A549 (cell line): ENCODE measurements at regions of chr9 and their contacts with region 1.

Region 1: GRCh38 chr9:34403554-34404380 is 27.1 kb upstream of the MYORG start:
- DNase-seq: peak; percentile 66 to 73
- ATAC-seq: peak; percentile 72 to 87; a peak in 5 of 6 replicates
- H3K4me3 ChIP-seq: no peak overlapping the region
- H3K27ac ChIP-seq: no peak overlapping the region
- H3K4me1 ChIP-seq: 0 out of 3 replicates have a peak, but pooled peaks cover 3% of the 10 kb centered on the region
- CTCF ChIP-seq: peak; percentile 96
- EP300 ChIP-seq: no peak
- POLR2A ChIP-seq: no peak
- RAD21 ChIP-seq: peak; percentile 76 to 87

Region 2: DNA sequence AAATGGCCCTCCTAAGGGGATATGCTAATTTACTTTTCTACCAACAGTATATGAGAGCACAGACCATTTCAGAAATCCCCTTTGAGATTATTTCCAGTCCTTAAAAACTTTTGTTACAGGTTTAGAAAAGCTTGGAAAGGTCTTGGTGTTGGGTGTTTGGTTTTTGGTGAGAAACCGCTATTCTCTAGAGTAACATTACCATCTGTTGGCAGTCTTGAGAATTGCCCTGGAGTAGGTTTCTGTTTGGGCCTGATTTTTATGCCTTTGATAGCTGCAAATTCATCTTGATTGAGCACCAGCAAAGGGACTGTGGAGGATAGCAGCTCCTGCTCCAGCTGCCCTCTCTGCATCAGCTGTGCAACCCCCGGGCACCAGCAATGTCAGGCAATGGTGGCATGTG is 66.4 kb before region 1 on chr9:
- CTCF ChIA-PET with region 1: interaction called, 13 read pairs
- POLR2A ChIA-PET with region 1: no interaction called
- DNase-seq: peak in 1 of 2 experiments; percentile 16
- ATAC-seq: no peak
- H3K4me3 ChIP-seq: no peak overlapping the region
- H3K27ac ChIP-seq: no peak overlapping the region
- H3K4me1 ChIP-seq: peaks cover 4% of the 10 kb centered on the region; the same call in 2 of the 3 replicates
- CTCF ChIP-seq: no peak
- EP300 ChIP-seq: no peak
- POLR2A ChIP-seq: no peak
- RAD21 ChIP-seq: peak; percentile 11 to 39; a peak in 2 of 5 replicates

Region 3: GRCh38 chr9:34419716-34420504 is 16.1 kb after region 1 on chr9:
- CTCF ChIA-PET with region 1: interaction called, 63 read pairs
- POLR2A ChIA-PET with region 1: no interaction called
- DNase-seq: no peak
- ATAC-seq: no peak
- H3K4me3 ChIP-seq: no peak overlapping the region
- H3K27ac ChIP-seq: no peak overlapping the region
- H3K4me1 ChIP-seq: no peaks in the 10 kb centered on the region
- CTCF ChIP-seq: no peak
- EP300 ChIP-seq: no peak
- POLR2A ChIP-seq: no peak
- RAD21 ChIP-seq: no peak

Region 4: DNA sequence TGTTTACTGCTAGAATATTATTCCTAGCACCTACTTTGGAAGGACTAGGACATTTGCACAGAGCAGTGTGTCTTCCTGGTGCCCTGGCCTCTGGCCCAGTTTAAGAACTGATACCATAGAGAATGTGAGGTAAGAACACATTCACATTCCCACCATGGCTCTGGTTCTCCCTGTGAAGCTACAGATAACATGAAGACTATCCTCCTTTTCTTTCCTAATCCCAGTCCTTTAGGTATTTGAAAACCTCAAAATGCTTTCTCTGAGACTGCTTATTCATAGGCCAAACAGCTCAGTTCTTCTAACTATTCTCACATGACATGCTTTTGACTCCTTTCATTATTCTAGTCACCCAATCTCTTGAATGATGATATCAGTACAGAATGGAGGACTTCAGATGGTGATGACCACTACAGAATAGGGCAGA is 42.7 kb after region 1 on chr9:
- CTCF ChIA-PET with region 1: interaction called, 18 read pairs
- POLR2A ChIA-PET with region 1: no interaction called
- DNase-seq: no peak
- ATAC-seq: no peak
- H3K4me3 ChIP-seq: no peak overlapping the region
- H3K27ac ChIP-seq: no peak overlapping the region
- H3K4me1 ChIP-seq: no peaks in the 10 kb centered on the region
- CTCF ChIP-seq: no peak
- EP300 ChIP-seq: no peak
- POLR2A ChIP-seq: no peak
- RAD21 ChIP-seq: no peak

Region 5: DNA sequence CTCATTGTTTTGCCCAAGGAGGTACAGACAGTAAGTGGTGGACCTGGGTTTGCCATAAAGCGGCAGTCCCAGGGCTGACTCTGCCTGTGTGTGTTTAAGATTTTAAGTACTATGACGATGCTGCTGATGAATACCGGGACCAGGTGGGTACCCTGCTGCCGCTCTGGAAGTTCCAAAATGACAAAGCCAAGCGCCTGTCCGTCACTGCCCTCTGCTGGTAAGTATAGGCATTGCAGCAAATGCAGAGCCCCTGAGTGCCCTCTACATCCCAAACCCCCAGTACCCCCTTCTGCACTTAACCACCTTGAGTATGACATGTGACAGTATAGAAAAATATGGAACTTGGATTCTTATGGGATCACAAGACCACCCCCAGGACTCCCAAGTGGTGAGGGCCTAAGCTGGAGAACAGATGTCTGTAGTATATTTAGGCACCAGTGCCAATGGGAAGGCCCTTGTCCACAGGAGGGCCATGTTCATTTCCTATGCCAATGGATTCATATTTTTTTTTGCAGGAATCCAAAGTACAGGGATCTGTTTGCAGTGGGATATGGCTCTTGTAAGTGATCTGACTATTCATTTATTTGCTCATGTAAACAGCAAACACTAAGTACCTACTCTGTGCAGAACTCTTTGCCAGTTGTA is 97.0 kb after region 1 on chr9:
- CTCF ChIA-PET with region 1: interaction called, 65 read pairs
- POLR2A ChIA-PET with region 1: no interaction called
- DNase-seq: peak; percentile 43 to 73
- ATAC-seq: peak; percentile 62 to 84
- H3K4me3 ChIP-seq: no peak overlapping the region
- H3K27ac ChIP-seq: no peak overlapping the region
- H3K4me1 ChIP-seq: peaks cover 6% of the 10 kb centered on the region; the same call in 1 of the 3 replicates
- CTCF ChIP-seq: peak; percentile 93
- EP300 ChIP-seq: no peak
- POLR2A ChIP-seq: no peak
- RAD21 ChIP-seq: peak; percentile 83 to 85

Region 6: GRCh38 chr9:34578241-34579103 is 174.7 kb after region 1 on chr9:
- CTCF ChIA-PET with region 1: interaction called, 13 read pairs
- POLR2A ChIA-PET with region 1: no interaction called
- DNase-seq: no peak
- ATAC-seq: no peak; a peak in 1 of 6 replicates
- H3K4me3 ChIP-seq: no peak overlapping the region
- H3K27ac ChIP-seq: no peak overlapping the region
- H3K4me1 ChIP-seq: no peaks in the 10 kb centered on the region
- CTCF ChIP-seq: no peak
- EP300 ChIP-seq: no peak
- POLR2A ChIP-seq: no peak
- RAD21 ChIP-seq: no peak